IMR-90 (cell line): ENCODE measurements at regions of chr5 and their contacts with region 1.

Region 1: DNA sequence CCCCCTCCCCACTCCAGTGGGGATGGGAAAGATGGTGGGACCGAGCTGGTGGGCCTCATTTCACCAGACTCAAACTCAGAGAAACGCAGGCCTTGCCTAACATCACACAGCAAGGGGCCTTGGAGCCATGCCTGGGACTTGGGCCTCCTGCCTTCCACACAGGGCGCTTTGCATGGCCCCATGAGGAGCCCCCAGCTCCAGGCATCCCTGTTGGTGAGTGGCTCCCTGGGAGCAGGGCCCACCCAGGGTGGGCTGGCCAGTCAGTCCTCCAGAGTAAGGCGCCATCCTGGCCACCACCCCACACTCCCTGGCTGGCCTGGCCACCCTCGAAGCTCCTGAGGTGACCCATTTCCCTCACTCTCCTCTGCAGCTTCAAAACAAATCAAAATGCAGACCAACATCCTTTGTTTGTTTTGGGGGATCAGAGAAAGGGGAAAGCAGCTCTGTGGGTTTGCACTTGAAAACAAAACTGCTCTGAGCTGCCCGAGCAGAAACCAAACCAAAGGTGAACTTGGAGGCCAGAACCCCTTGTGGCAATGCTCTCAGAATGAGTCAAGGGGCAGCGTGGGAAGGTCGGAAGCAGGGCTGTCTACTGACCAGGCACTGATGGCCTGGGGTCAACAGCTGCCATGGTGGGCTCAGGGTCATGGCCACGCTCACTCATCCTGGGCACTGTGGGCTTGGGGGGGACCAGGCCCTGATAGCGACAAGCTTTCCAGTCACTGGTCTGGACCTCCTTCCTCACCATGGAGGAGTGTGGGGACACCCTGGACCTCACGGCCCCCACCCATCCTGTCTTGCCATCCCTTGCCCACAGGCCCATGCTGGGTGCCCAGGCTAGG is 37.0 kb upstream of the VDAC1 start:
- DNase-seq: no peak
- ATAC-seq: no peak
- H3K4me3 ChIP-seq: no peak overlapping the region
- H3K27ac ChIP-seq: no peak overlapping the region
- H3K4me1 ChIP-seq: no peaks in the 10 kb centered on the region
- H3K27me3 ChIP-seq: peaks cover 24% of the 10 kb centered on the region
- CTCF ChIP-seq: no peak
- POLR2A ChIP-seq: no peak
- RAD21 ChIP-seq: no peak

Region 2: DNA sequence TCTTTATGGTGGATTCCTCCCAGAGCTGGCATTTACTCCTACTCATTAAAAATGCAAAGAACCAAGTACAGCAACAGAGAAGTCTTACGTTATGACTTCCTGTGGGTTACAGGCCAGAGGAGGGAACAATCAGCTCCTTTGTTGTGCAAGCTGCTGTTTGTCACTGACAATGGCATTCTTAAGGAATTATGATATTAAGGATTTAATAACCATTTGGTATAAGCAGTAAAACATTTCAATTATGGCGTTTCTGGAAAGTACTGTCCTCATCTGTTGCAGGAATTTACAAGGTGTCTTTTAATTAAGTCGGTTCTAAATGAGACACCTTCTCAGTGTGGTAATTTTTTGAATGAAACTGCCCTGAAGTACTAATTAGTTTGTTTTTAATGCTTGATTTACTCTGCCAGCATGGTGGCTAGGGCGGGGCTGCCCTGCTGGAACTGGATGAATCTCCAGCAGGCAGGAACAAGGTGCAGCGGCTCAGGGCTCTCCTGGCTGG is 12.1 kb after region 1 on chr5:
- CTCF ChIA-PET with region 1: interaction called, 26 read pairs
- POLR2A ChIA-PET with region 1: no interaction called
- dilution Hi-C with region 1: no loop called
- in situ Hi-C with region 1: no loop called
- intact Hi-C with region 1: no loop called
- DNase-seq: peak; percentile 8
- ATAC-seq: no peak
- H3K4me3 ChIP-seq: no peak overlapping the region
- H3K27ac ChIP-seq: no peak overlapping the region
- H3K4me1 ChIP-seq: no peaks in the 10 kb centered on the region
- H3K27me3 ChIP-seq: peaks cover 25% of the 10 kb centered on the region
- CTCF ChIP-seq: no peak
- POLR2A ChIP-seq: no peak
- RAD21 ChIP-seq: no peak

Region 3: GRCh38 chr5:134140530-134141201 is 98.9 kb after region 1 on chr5:
- CTCF ChIA-PET with region 1: interaction called, 47 read pairs
- POLR2A ChIA-PET with region 1: no interaction called
- dilution Hi-C with region 1: no loop called
- in situ Hi-C with region 1: loop called (anchors 5 kb)
- intact Hi-C with region 1: loop called (anchors 1 kb)
- DNase-seq: peak; percentile 71
- ATAC-seq: peak; percentile 82
- H3K4me3 ChIP-seq: no peak overlapping the region
- H3K27ac ChIP-seq: no peak overlapping the region
- H3K4me1 ChIP-seq: peaks cover 13% of the 10 kb centered on the region
- H3K27me3 ChIP-seq: no peaks in the 10 kb centered on the region
- CTCF ChIP-seq: peak; percentile 75
- POLR2A ChIP-seq: no peak
- RAD21 ChIP-seq: peak; percentile 70

Region 4: DNA sequence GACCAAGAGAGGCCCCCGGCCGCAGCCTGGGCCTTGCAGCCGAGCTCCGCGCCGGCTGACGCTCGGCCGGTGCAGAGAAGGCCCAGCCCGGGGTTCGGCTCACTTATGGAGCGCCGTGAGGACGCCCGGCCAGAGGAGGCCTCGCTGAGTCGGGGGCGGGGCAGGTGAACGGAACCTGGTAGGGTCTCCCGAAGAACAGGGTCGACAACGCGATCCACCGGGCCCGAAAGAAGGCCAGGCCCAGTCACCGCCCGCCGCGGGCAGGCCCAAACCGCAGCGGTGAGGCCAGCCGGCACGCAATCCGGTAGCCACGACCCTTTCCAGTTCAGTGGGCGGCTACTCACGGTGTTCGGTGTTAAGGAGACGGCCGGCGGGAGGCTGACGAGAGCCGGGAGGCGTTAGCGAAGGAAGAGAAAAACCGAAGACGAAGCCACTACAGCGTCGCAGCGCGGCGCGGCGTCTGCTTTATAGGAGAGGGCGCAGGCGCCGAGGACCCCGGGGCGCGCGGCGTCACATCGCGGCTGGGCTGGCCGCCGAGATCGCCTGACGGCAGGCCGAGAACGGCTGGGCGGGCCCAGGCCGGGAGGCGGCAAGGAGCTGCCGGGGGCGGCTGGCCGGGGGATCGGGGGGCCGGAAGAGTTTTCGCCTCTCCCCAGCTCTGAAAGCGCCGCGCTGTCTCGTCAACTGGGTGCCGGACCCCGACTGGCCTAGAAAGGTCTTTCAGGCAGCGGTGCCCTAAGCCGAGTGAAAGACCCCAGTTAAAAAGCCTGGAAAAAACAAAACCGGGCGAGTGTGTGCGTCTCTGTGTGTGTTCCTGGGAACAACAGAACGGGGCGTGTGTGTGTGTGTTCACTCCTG is 134.9 kb after region 1 on chr5 and contains the start of gene SKP1:
- CTCF ChIA-PET with region 1: no interaction called
- POLR2A ChIA-PET with region 1: no interaction called
- dilution Hi-C with region 1: no loop called
- in situ Hi-C with region 1: no loop called
- intact Hi-C with region 1: loop called (anchors 1 kb)
- DNase-seq: peak; percentile 71
- ATAC-seq: peak; percentile 91
- H3K4me3 ChIP-seq: peak within 1 kb of the TSS; percentile 92
- H3K27ac ChIP-seq: peak within 1 kb of the TSS; percentile 94
- H3K4me1 ChIP-seq: no peaks in the 10 kb centered on the region; the same call in 1 of the 2 replicates
- H3K27me3 ChIP-seq: no peaks in the 10 kb centered on the region
- CTCF ChIP-seq: no peak
- POLR2A ChIP-seq: peak; percentile 100
- RAD21 ChIP-seq: no peak
- total RNA-seq, gene SKP1: 206 and 360 TPM in 2 replicates